Gastrocnemius medialis (tissue), 4 donors: ENCODE measurements at regions of chr19 and their contacts with region 1.

Region 1: GRCh38 chr19:56314562-56315077 is at the start of gene ZSCAN5A:
- DNase-seq: peak; percentile 94 to 95
- ATAC-seq: peak; percentile 94 to 96
- H3K4me3 ChIP-seq: peak within 1 kb of the TSS; percentile 73 to 81 (median 78)
- H3K27ac ChIP-seq: peak within 1 kb of the TSS; percentile 92 to 99 (median 96)
- H3K4me1 ChIP-seq: peaks cover 13 to 15% of the 10 kb centered on the region in 2 donors
- H3K27me3 ChIP-seq: no peaks in the 10 kb centered on the region
- CTCF ChIP-seq: no peak
- POLR2A ChIP-seq: peak; percentile 4 to 21
- total RNA-seq, gene ZSCAN5A: 1.00 to 26.1 (median 3.6) TPM

Region 2: DNA sequence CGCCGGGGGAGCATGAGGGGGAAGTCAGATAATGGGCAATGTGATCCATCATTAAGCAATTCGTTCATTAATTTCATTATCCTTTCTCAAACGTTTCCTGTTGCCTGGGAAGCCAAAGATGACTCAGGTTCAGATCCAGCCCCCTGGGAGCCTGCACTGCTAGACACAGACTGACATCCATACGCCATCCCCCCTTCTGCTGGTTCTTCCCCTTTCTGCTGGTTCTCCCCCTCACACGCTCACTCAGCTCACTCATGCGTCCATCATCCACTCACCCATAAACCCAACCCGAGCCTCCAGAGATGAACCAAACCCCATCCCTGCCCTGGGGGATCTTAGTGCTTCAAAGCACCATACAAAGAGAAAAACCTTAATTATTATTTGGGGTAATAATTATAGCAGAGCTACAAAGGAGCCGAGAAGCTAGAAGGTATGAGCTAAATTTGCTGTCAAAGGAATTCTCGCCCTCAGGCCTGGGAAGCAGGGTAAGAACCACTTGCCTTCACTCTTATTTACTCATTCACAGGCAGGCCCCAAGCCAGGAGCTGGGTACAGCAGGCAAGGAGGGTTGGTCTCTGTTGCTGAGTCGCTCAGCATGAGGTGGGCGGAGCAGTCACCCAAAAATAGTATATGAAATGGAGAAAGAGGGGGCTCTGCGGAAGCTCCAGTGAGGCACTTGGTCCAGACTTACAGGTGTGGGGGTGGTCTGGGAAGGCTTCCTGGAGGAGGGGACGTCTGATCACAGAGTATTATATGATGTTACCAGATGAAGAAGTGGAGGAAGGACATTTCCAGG is 180.6 kb before region 1 on chr19:
- in situ Hi-C with region 1: loop called in 2 of 4 experiments (anchors 10 kb)
- intact Hi-C with region 1: no loop called
- DNase-seq: no peak
- ATAC-seq: no peak
- H3K4me3 ChIP-seq: no peak overlapping the region
- H3K27ac ChIP-seq: no peak overlapping the region
- H3K4me1 ChIP-seq: peaks cover 0 to 4% of the 10 kb centered on the region in 2 donors
- H3K27me3 ChIP-seq: no peaks in the 10 kb centered on the region
- CTCF ChIP-seq: no peak
- POLR2A ChIP-seq: no peak

Region 3: DNA sequence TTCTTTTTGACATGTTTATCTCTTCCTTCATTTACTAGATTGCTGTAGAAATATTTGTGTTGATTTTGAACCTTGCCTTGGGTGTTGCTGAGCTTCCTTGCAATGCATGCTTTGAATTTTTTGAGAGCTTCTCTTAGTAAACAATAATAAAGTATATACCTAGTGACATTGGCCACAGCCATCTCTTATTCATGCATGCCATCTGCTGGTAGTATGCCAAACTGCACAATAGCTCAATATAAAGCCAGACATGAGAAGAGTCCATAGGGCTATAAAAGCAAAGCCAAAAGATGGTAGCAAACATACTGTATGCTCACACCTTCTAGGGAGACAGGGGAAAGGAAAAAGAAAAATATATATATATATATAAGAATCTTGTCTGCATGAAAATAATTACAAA is 18.9 kb after region 1 on chr19:
- in situ Hi-C with region 1: no loop called
- intact Hi-C with region 1: no loop called
- DNase-seq: no peak
- ATAC-seq: no peak
- H3K4me3 ChIP-seq: no peak overlapping the region
- H3K27ac ChIP-seq: no peak overlapping the region
- H3K4me1 ChIP-seq: no peaks in the 10 kb centered on the region
- H3K27me3 ChIP-seq: no peaks in the 10 kb centered on the region
- CTCF ChIP-seq: peak in 1 of 5 experiments; percentile 16
- POLR2A ChIP-seq: no peak

Region 4: GRCh38 chr19:56367829-56368711 is 53.5 kb after region 1 on chr19:
- in situ Hi-C with region 1: no loop called
- intact Hi-C with region 1: loop called (anchors 5 kb)
- DNase-seq: peak; percentile 75 to 90
- ATAC-seq: peak; percentile 96 to 97
- H3K4me3 ChIP-seq: peak overlapping the region; percentile 75 to 94 (median 80)
- H3K27ac ChIP-seq: peak overlapping the region; percentile 78 to 86 (median 84)
- H3K4me1 ChIP-seq: peaks cover 10 to 18% of the 10 kb centered on the region in 2 donors
- H3K27me3 ChIP-seq: no peaks in the 10 kb centered on the region
- CTCF ChIP-seq: peak in 1 of 5 experiments; percentile 14
- POLR2A ChIP-seq: peak; percentile 23 to 39

Region 5: DNA sequence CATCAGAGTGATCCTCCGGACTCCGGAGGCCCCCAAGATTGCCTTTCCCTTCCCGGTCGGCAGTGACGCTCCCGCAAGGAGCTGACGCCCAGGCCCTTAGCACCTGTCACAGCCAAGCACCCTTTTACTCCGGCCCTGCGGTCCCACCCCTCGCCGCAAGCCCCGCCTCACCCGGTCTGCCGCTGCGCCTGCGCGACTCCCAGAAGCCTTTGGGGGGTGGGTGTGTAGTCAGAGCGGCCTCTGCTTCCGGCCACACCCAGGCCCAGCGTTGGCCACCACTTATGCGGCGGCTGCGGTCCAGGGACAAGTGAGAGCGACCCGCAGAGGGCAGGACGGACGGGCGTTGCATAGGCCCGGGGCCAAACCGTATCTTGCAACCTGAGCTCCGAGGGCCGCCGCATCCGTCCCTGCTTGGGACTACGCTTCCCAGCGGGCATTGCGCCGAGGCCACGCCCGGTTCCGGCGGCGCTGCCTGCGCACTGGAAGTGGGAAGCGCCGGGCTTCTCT is 223.7 kb after region 1 on chr19:
- in situ Hi-C with region 1: no loop called
- intact Hi-C with region 1: loop called (anchors 10 kb)
- DNase-seq: peak; percentile 79 to 87
- ATAC-seq: peak; percentile 98 to 99
- H3K4me3 ChIP-seq: peak overlapping the region; percentile 82 to 99 (median 89)
- H3K27ac ChIP-seq: peak overlapping the region; percentile 87 to 97 (median 94)
- H3K4me1 ChIP-seq: peaks cover 7 to 13% of the 10 kb centered on the region in 2 donors
- H3K27me3 ChIP-seq: no peaks in the 10 kb centered on the region
- CTCF ChIP-seq: peak in 1 of 5 experiments; percentile 25
- POLR2A ChIP-seq: peak in 1 of 2 donors; percentile 34

Region 6: GRCh38 chr19:56594783-56595547 is 280.3 kb after region 1 on chr19 and contains the start of gene ZNF71:
- in situ Hi-C with region 1: no loop called
- intact Hi-C with region 1: loop called (anchors 10 kb)
- DNase-seq: peak; percentile 71 to 75
- ATAC-seq: peak; percentile 77 to 90
- H3K4me3 ChIP-seq: peak within 1 kb of the TSS; percentile 73 to 98 (median 84)
- H3K27ac ChIP-seq: peak within 1 kb of the TSS; percentile 76 to 82 (median 78)
- H3K4me1 ChIP-seq: peaks cover 12 to 18% of the 10 kb centered on the region in 2 donors
- H3K27me3 ChIP-seq: no peaks in the 10 kb centered on the region
- CTCF ChIP-seq: no peak
- POLR2A ChIP-seq: peak in 1 of 2 donors; percentile 28
- total RNA-seq, gene ZNF71: 6.7 to 7.5 (median 7.4) TPM

Region 7: GRCh38 chr19:56692206-56692895 is 377.7 kb after region 1 on chr19:
- in situ Hi-C with region 1: no loop called
- intact Hi-C with region 1: no loop called
- DNase-seq: no peak
- ATAC-seq: no peak
- H3K4me3 ChIP-seq: no peak overlapping the region
- H3K27ac ChIP-seq: no peak overlapping the region
- H3K4me1 ChIP-seq: no peaks in the 10 kb centered on the region
- H3K27me3 ChIP-seq: no peaks in the 10 kb centered on the region
- CTCF ChIP-seq: no peak
- POLR2A ChIP-seq: no peak